Activated naive CD8-positive, alpha-beta T cell treated with anti-CD3 and anti-CD28 coated beads, Interleukin-2, amount 10 ng/mL, durations not matched to agents 7 days and 5 days (primary cell): ENCODE measurements at regions of chr11 and their contacts with region 1.

Region 1: GRCh38 chr11:207208-207862 is at the starts of genes BET1L and RIC8A:
- DNase-seq: peak; percentile 98
- ATAC-seq: peak; percentile 81
- H3K4me3 Mint-ChIP-seq: peak within 1 kb of the TSS; percentile 89
- H3K27ac Mint-ChIP-seq: peak within 1 kb of the TSS; percentile 97
- H3K4me1 Mint-ChIP-seq: peaks cover 35% of the 10 kb centered on the region
- H3K27me3 Mint-ChIP-seq: no peaks in the 10 kb centered on the region
- total RNA-seq, gene BET1L: 56.9 to 61.9 TPM
- total RNA-seq, gene RIC8A: 102 to 111 TPM

Region 2: GRCh38 chr11:196786-197719 is 10.3 kb before region 1 on chr11:
- POLR2A ChIA-PET with region 1: interaction called, 10 read pairs
- DNase-seq: peak; percentile 30
- ATAC-seq: no peak
- H3K4me3 Mint-ChIP-seq: no peak overlapping the region
- H3K27ac Mint-ChIP-seq: no peak overlapping the region
- H3K4me1 Mint-ChIP-seq: peaks cover 9% of the 10 kb centered on the region
- H3K27me3 Mint-ChIP-seq: no peaks in the 10 kb centered on the region

Region 3: GRCh38 chr11:269146-269890 is 62.0 kb after region 1 on chr11:
- POLR2A ChIA-PET with region 1: interaction called, 24 read pairs
- DNase-seq: peak; percentile 56
- ATAC-seq: peak; percentile 34
- H3K4me3 Mint-ChIP-seq: peak overlapping the region; percentile 91
- H3K27ac Mint-ChIP-seq: peak overlapping the region; percentile 96
- H3K4me1 Mint-ChIP-seq: peaks cover 25% of the 10 kb centered on the region
- H3K27me3 Mint-ChIP-seq: peaks cover 2% of the 10 kb centered on the region

Region 4: DNA sequence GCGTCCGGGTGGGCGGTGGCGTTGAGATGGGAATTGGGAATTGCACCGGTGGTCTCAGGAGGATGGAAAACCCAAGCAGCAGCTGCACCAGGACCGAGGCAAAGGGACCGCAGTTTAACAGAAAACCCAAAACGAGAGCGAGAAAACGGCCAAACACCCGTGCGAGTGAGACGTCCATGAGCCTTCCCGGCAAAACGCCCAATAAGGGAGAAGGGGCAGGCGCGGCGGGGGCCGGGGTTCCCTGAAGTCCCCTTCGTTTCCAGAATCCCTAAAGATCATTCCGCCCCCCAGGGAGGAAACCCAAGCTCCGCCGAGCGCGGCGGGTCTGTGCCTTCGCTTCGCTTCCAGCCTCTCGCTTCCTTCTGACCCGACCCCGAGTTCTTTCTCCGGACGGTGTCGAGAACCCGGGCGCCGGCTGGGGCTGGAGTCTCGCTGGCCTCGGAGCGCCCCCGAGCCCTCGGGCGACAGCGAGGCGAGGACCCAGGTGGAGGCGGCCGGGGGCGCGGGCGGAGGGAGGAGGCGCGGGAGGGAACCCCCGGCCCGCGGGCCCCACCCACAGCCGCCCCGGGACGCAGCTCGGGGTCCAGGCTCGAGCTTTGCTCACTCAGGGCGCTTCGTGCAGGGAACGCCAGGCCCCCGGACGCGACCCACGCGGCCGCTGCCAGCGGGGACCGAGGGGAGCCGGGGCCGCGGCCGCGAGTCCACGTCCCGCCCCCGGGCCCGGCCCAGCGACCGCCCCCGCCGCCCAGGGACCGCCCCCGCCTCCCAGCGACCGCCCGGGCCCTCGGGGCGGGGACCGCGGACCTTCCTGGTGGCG is 81.2 kb after region 1 on chr11 and contains the start of gene PGGHG:
- POLR2A ChIA-PET with region 1: interaction called, 43 read pairs
- DNase-seq: peak; percentile 88
- ATAC-seq: peak; percentile 38
- H3K4me3 Mint-ChIP-seq: peak within 1 kb of the TSS; percentile 93
- H3K27ac Mint-ChIP-seq: peak within 1 kb of the TSS; percentile 98
- H3K4me1 Mint-ChIP-seq: peaks cover 34% of the 10 kb centered on the region
- H3K27me3 Mint-ChIP-seq: no peaks in the 10 kb centered on the region
- total RNA-seq, gene PGGHG: 641 to 664 TPM

Region 5: GRCh38 chr11:313787-314547 is 106.6 kb after region 1 on chr11 and contains the start of gene IFITM1:
- POLR2A ChIA-PET with region 1: interaction called, 19 read pairs
- DNase-seq: peak; percentile 78
- ATAC-seq: peak; percentile 41
- H3K4me3 Mint-ChIP-seq: peak within 1 kb of the TSS; percentile 97
- H3K27ac Mint-ChIP-seq: peak within 1 kb of the TSS; percentile 100
- H3K4me1 Mint-ChIP-seq: peaks cover 26% of the 10 kb centered on the region
- H3K27me3 Mint-ChIP-seq: no peaks in the 10 kb centered on the region
- total RNA-seq, gene IFITM1: 1,182 to 1,374 TPM

Region 6: DNA sequence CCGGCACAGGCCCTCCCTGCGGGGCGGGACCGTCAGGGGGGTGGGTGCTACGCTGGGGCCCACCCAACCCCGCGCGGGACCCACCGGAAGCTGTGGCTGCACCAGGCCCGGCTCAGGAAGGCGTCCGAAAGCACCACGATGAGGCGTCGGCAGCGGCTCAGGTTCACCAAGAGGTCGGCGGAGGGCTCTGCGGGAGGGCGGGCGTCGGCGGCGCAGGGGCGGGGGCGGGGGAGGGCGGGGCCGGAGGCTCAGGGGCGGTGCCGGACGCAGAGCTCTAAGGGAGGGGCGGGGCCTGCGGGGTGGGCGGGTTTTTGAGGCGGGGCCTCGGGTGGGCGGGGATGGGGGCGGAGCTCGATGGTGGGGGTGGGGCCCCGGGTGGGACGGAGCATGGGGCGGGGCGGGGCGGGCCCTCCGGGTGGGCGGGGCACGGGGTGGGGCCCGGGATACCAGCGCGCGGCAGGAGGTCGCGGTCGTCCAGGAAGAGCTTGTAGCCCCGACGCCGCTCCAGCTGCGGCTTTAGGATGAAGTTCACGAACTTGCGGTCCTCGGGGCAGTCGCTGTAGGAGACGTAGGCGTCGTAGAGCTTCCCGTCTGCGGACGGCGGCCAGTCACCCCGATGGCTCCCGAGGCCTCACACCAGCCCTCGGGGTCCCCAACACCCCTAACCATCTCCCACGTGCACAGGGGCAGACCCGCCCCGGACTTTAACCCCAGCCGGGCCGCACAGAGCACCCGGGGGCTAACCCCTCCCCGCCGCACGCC is 199.8 kb after region 1 on chr11:
- POLR2A ChIA-PET with region 1: interaction called, 13 read pairs
- DNase-seq: peak; percentile 95
- ATAC-seq: peak; percentile 93
- H3K4me3 Mint-ChIP-seq: peak overlapping the region; percentile 25
- H3K27ac Mint-ChIP-seq: peak overlapping the region; percentile 61
- H3K4me1 Mint-ChIP-seq: peaks cover 5% of the 10 kb centered on the region
- H3K27me3 Mint-ChIP-seq: no peaks in the 10 kb centered on the region

Region 7: DNA sequence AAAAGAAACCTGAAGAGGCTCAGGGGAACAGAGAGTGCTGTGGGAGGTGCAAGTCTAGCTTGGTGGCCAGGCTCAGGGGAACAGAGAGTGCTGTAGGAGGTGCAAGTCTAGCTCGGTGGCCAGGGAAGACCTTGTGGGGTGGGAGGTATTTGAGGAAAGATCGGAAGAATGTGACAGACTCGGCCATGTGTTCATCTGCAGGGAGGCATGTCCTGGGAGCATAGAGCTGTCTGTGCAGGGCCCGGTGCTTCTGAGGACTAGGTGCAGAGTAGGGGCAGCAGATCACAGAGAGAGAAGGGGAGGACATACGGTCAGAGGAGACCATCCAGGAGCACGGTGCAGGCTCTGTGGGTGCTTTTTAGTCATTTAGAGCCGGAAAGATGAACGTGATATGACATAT is 1532.2 kb after region 1 on chr11:
- POLR2A ChIA-PET with region 1: no interaction called
- DNase-seq: no peak
- ATAC-seq: no peak
- H3K4me3 Mint-ChIP-seq: no peak overlapping the region
- H3K27ac Mint-ChIP-seq: no peak overlapping the region
- H3K4me1 Mint-ChIP-seq: peaks cover under 1% of the 10 kb centered on the region
- H3K27me3 Mint-ChIP-seq: peaks cover 32% of the 10 kb centered on the region